ENCODE measurements at regions of chr14 and their contacts with region 1.

Region 1: GRCh38 chr14:75002392-75003249 is at the start of gene EIF2B2:
- DNase-seq: peak; percentile 98
- H3K4me3 ChIP-seq: peak within 1 kb of the TSS; percentile 86 to 96 (median 95)
- H3K27ac ChIP-seq: peak within 1 kb of the TSS; percentile 80 to 85 (median 84)
- H3K4me1 ChIP-seq: peaks cover 0 to 22% (median 19%) of the 10 kb centered on the region in 4 donors
- H3K27me3 ChIP-seq: no peaks in the 10 kb centered on the region
- CTCF ChIP-seq: peak in 1 of 4 experiments; percentile 34
- EP300 ChIP-seq: no peak
- POLR2A ChIP-seq: peak; percentile 50 to 52
- total RNA-seq, gene EIF2B2: 34.1 to 37.5 (median 35.3) TPM

Region 2: DNA sequence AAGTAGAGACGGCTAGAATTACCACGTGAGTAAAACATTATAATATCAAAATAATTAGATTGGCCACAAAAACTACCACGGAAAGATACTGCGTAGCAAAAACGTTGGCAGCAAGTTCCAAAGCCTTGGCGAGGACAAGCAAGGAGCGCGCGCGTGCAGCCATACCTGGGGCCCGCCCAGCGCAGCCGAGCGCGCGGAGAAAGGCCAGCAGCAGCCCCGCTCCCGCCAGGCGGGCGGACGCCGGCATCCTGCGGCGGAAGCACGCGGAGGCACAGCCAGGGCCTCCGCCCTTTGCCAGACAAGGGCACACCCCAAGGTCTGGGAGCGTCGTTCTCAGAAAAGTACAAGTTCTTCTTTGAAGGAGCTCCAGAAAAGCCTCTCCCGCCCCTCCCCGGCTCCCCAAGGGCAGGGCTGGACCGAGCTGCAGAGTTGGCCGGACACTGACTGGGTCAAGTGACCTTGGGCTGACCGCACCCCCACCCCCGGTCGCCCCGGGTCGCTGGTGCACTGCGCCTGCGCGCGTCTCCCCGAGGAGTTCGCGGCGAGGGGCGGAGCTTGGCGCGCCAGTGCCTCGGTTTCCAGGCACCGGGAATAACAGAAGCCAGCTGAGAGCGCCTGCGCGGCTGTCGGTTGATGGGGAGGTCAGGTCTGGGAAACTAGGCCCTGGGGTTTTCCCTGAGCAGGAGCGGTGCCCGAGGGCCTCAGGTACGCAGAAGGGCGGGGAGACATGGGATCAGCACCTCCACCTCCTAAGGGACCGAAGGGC is 66.6 kb after region 1 on chr14 and contains the start of gene ZC2HC1C:
- intact Hi-C with region 1: loop called (anchors 5 kb)
- DNase-seq: peak; percentile 98
- H3K4me3 ChIP-seq: peak within 1 kb of the TSS; percentile 46 to 61 (median 60)
- H3K27ac ChIP-seq: peak within 1 kb of the TSS; percentile 93 to 95 (median 94)
- H3K4me1 ChIP-seq: peaks cover 0 to 41% (median 26%) of the 10 kb centered on the region in 4 donors
- H3K27me3 ChIP-seq: no peaks in the 10 kb centered on the region
- CTCF ChIP-seq: no peak
- EP300 ChIP-seq: peak in 2 of 4 donors; percentile 49 to 75
- POLR2A ChIP-seq: peak; percentile 33 to 41
- total RNA-seq, gene ZC2HC1C: 3.6 to 4.6 (median 4.0) TPM

Measured in sigmoid colon (tissue), 7 donors.